IMR-90 (cell line): ENCODE measurements at regions of chr11 and their contacts with region 1.

Region 1: GRCh38 chr11:85595285-85595884 is 31.8 kb downstream of the DLG2 start:
- DNase-seq: peak; percentile 63
- ATAC-seq: peak; percentile 79
- H3K4me3 ChIP-seq: no peak overlapping the region
- H3K27ac ChIP-seq: no peak overlapping the region
- H3K4me1 ChIP-seq: no peaks in the 10 kb centered on the region
- H3K27me3 ChIP-seq: no peaks in the 10 kb centered on the region; the same call in 1 of the 2 replicates
- CTCF ChIP-seq: peak; percentile 70
- POLR2A ChIP-seq: no peak
- RAD21 ChIP-seq: peak; percentile 92

Region 2: GRCh38 chr11:84558085-84558905 is 1037.1 kb before region 1 on chr11:
- CTCF ChIA-PET with region 1: no interaction called
- POLR2A ChIA-PET with region 1: no interaction called
- dilution Hi-C with region 1: no loop called
- in situ Hi-C with region 1: no loop called
- intact Hi-C with region 1: loop called (anchors 1 kb)
- DNase-seq: peak; percentile 53
- ATAC-seq: peak; percentile 95
- H3K4me3 ChIP-seq: no peak overlapping the region
- H3K27ac ChIP-seq: no peak overlapping the region
- H3K4me1 ChIP-seq: no peaks in the 10 kb centered on the region
- H3K27me3 ChIP-seq: no peaks in the 10 kb centered on the region
- CTCF ChIP-seq: peak; percentile 78
- POLR2A ChIP-seq: no peak
- RAD21 ChIP-seq: peak; percentile 55

Region 3: DNA sequence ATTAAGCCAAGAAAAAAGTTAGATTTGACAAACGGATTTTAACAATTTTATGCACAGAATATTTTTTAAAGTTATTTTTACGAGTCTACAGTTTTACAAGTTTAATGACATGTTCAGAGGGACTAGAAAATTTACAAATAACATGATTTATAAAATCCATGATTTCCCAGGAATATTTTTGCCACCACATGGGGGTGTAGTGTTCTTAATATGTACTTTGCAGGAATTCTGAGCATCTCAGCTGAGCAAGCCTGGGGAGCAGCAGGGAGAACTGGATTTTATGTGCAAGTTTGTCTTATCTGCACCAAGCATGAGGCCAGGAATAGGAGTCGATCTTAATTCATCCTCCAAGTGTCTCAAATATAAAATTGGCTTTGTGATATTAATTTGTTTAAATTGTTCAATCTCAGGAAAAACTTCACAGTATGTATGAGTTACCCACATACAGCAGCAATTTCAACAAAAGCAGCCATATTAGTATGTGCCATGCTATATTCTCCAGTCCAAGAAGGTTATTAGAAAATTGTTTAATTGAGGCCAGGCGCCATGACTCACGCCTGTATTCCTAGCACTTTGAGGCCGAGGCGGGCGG is 794.5 kb before region 1 on chr11:
- CTCF ChIA-PET with region 1: no interaction called
- POLR2A ChIA-PET with region 1: no interaction called
- dilution Hi-C with region 1: no loop called
- in situ Hi-C with region 1: no loop called
- intact Hi-C with region 1: loop called (anchors 2 kb)
- DNase-seq: peak; percentile 36
- ATAC-seq: peak; percentile 60; the same call in 1 of the 2 replicates
- H3K4me3 ChIP-seq: no peak overlapping the region
- H3K27ac ChIP-seq: no peak overlapping the region
- H3K4me1 ChIP-seq: no peaks in the 10 kb centered on the region
- H3K27me3 ChIP-seq: no peaks in the 10 kb centered on the region
- CTCF ChIP-seq: peak; percentile 57
- POLR2A ChIP-seq: no peak
- RAD21 ChIP-seq: peak; percentile 60

Region 4: GRCh38 chr11:85647604-85648299 is 52.4 kb after region 1 on chr11 and contains the start of gene TMEM126A:
- CTCF ChIA-PET with region 1: interaction called, 11 read pairs
- POLR2A ChIA-PET with region 1: no interaction called
- dilution Hi-C with region 1: no loop called
- in situ Hi-C with region 1: no loop called
- intact Hi-C with region 1: no loop called
- DNase-seq: peak; percentile 75
- ATAC-seq: peak; percentile 99
- H3K4me3 ChIP-seq: peak within 1 kb of the TSS; percentile 89
- H3K27ac ChIP-seq: peak within 1 kb of the TSS; percentile 75
- H3K4me1 ChIP-seq: no peaks in the 10 kb centered on the region
- H3K27me3 ChIP-seq: no peaks in the 10 kb centered on the region
- CTCF ChIP-seq: no peak
- POLR2A ChIP-seq: peak; percentile 79; the same call in 1 of the 2 replicates
- RAD21 ChIP-seq: no peak
- total RNA-seq, gene TMEM126A: 60.4 and 87.2 TPM in 2 replicates

Region 5: DNA sequence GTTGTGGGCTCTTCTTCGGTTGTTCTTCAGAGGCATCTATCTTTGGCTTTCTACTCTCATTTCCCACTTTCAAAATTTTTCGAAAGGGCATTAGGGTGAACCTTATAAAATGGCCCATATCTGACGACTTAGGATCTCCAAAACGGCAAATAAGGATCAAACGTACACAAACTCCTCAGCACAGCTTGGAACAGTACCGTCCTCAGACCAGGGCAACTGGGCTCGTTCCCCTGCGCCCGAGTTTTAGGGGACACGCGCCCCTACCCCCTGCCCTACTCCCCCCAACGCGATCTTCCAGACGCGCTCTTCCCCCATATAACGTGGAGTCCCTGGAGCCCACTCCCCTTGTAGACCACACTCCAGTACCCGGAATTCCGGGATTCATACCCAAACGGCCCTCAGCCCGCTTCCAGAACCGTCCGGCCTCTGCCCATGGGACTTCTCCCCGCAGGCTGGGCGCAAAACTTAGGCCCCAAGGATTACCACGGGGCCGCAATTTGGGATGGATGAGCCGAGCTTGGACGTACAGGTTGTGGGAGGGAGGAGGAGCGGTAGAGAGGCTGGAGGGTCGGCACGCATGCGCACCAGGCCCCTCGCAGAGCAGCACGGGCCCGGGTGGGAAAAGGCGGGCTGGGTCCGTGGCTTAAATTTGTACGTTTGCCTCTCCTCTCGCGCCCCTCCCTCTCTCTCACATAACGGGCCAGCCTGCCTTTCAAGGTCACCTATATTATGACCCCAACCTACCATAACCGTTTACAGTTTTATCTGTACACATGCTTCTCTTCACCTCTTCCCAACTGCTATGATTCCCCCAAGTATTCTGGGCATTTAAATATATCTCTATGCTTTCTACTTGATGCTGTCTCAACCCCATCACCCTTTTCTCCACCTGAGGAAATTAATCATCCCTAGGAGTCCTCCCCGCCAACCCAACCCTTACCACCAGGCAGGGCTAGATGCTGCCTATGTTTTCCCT is 87.2 kb after region 1 on chr11:
- CTCF ChIA-PET with region 1: no interaction called
- POLR2A ChIA-PET with region 1: no interaction called
- dilution Hi-C with region 1: no loop called
- in situ Hi-C with region 1: no loop called
- intact Hi-C with region 1: loop called (anchors 1 kb)
- DNase-seq: peak; percentile 47
- ATAC-seq: peak; percentile 24; the same call in 1 of the 2 replicates
- H3K4me3 ChIP-seq: peak overlapping the region; percentile 89
- H3K27ac ChIP-seq: peak overlapping the region; percentile 78
- H3K4me1 ChIP-seq: peaks cover 2% of the 10 kb centered on the region; the same call in 1 of the 2 replicates
- H3K27me3 ChIP-seq: no peaks in the 10 kb centered on the region
- CTCF ChIP-seq: no peak
- POLR2A ChIP-seq: no peak
- RAD21 ChIP-seq: no peak

Region 6: GRCh38 chr11:85941380-85941973 is 346.1 kb after region 1 on chr11:
- CTCF ChIA-PET with region 1: no interaction called
- POLR2A ChIA-PET with region 1: no interaction called
- dilution Hi-C with region 1: no loop called
- in situ Hi-C with region 1: no loop called
- intact Hi-C with region 1: loop called (anchors 1 kb)
- DNase-seq: peak; percentile 74
- ATAC-seq: peak; percentile 93
- H3K4me3 ChIP-seq: no peak overlapping the region
- H3K27ac ChIP-seq: no peak overlapping the region
- H3K4me1 ChIP-seq: peaks cover 5% of the 10 kb centered on the region; the same call in 1 of the 2 replicates
- H3K27me3 ChIP-seq: no peaks in the 10 kb centered on the region
- CTCF ChIP-seq: peak; percentile 74
- POLR2A ChIP-seq: no peak
- RAD21 ChIP-seq: peak; percentile 81